ENCODE measurements at regions of chr2 and their contacts with region 1.

Region 1: DNA sequence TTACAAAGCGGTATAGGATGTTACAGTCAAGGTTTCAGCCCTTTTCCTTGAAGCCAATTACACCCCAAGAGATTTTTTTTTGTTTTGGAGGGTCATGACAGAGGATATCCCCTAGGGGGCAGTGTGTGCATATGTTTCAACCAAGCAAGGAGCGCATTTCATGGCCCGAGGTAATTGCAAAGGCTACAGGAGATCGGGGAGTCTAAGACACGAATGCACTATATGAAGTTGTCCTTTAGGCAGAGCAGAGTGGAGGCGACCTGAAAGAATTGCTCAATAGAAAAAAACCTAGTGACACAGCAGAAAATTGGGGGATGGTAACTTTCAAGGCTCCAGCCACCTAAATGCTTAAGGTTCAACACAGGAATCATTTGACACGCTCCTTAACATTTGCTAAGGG is 219.8 kb upstream of the PARD3B start:
- DNase-seq: peak; percentile 78
- H3K4me3 ChIP-seq: no peak overlapping the region
- H3K27ac ChIP-seq: no peak overlapping the region
- H3K4me1 ChIP-seq: no peaks in the 10 kb centered on the region
- H3K27me3 ChIP-seq: no peaks in the 10 kb centered on the region
- CTCF ChIP-seq: peak; percentile 86 to 92 (median 91)
- POLR2A ChIP-seq: no peak

Region 2: DNA sequence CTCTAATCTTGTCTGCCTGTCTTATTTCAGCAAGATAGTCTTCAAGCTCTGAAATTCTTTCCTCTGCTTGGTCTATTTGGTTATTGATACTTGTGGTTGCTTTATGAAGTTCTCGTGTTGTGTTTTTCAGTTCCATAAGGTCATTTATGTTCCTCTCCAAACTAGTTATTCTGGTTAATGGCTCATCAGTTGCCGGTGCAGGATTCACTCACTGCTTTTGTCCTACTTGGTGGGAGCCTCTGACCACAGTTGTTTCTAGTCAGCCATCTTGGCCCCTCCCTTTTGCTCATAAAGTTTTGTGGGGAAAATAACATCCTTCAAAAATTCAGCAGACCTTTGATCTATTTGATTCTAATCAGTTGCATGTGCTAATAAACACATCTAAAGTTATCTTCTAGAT is 61.2 kb after region 1 on chr2:
- intact Hi-C with region 1: no loop called
- DNase-seq: no peak
- H3K4me3 ChIP-seq: no peak overlapping the region
- H3K27ac ChIP-seq: no peak overlapping the region
- H3K4me1 ChIP-seq: no peaks in the 10 kb centered on the region
- H3K27me3 ChIP-seq: no peaks in the 10 kb centered on the region
- CTCF ChIP-seq: no peak
- POLR2A ChIP-seq: no peak

Region 3: DNA sequence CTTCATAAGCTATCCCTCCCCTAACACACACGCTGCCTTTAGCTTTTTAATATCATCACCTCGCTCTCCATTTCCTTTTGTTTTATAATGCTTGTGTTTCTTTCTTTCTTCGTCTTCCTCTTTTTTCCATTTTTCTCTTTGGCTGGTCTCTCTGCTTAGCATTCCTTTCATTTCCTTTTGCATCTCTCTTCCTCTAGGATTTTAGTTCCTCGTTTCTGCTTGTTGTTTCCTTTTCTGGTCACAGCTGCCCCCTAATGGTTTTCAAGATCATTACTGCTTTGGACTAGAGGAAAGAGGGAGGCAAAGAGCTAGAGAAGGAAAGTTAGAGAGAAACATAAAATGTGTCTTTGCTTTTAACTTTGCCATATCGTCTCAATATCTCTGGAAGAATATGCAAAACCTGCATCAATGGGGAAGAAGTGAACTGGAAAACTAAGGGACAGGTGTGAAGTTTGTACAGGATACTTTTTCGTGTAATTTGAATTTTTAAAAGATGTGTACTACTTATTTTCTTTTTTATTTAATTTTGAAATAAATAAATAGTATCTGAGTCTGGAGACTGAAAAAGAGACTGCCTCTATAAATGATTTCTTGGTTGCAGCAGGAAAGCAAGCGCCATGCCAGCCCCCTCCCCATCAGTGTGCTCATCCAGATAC is 1350.5 kb after region 1 on chr2:
- intact Hi-C with region 1: loop called (anchors 10 kb)
- DNase-seq: no peak
- H3K4me3 ChIP-seq: no peak overlapping the region
- H3K27ac ChIP-seq: no peak overlapping the region
- H3K4me1 ChIP-seq: no peaks in the 10 kb centered on the region
- H3K27me3 ChIP-seq: no peaks in the 10 kb centered on the region
- CTCF ChIP-seq: peak; percentile 62 to 80 (median 65)
- POLR2A ChIP-seq: no peak

Measured in testis (tissue), 5 donors.